ENCODE measurements at regions of chr7 and their contacts with region 1.

Region 1: DNA sequence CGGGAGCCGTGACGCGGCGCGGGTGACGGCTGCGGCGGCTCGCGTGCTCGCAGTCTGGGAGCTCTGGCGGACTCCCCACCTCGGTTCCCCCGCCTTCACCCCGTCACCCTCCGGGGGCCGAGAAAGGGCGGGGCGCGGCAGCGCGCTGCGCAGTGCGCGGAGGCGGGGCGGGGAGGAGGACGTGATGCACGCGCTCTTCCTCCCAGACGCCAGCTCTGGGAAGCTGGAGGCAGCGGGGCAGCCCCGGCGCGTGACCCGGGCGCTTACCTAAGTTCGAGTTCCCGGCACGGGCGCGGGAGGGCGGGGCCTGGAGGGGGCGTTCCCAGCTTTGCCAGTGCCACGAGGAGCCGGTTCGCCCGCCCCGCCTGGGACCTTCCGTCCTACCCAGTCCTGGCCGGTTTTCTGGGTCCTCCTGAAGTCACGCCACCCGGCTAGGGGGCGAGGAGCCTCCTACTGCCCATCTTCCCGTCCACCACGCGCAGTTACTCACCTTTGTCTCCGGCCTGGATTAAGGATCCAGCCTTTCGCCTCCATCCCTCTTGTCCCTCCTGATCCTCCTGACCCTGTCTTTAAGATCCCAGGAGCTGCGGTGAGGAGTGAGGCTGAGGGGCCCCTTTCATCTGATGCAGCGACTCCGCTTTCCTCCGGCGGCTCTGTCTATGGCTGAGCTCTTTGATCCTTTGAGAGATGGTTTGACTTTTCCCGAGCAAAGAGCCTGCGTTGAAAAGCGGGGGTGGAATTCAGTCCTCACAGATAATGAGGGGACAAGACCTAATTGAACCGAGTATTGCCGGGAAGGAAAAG is 470 bp upstream of the NAMPT start:
- DNase-seq: peak; percentile 100
- ATAC-seq: peak; percentile 80
- H3K4me3 Mint-ChIP-seq: peak overlapping the region; percentile 94
- H3K27ac Mint-ChIP-seq: peak overlapping the region; percentile 99
- H3K4me1 Mint-ChIP-seq: peaks cover 45% of the 10 kb centered on the region
- H3K27me3 Mint-ChIP-seq: no peaks in the 10 kb centered on the region

Region 2: GRCh38 chr7:106112117-106112971 is 172.9 kb before region 1 on chr7 and contains the start of gene SYPL1:
- CTCF ChIA-PET with region 1: no interaction called
- POLR2A ChIA-PET with region 1: interaction called, 4 read pairs
- intact Hi-C with region 1: loop called (anchors 1 to 10 kb)
- DNase-seq: peak; percentile 95
- ATAC-seq: peak; percentile 86
- H3K4me3 Mint-ChIP-seq: peak within 1 kb of the TSS; percentile 79
- H3K27ac Mint-ChIP-seq: peak within 1 kb of the TSS; percentile 89
- H3K4me1 Mint-ChIP-seq: peaks cover 64% of the 10 kb centered on the region
- H3K27me3 Mint-ChIP-seq: no peaks in the 10 kb centered on the region
- total RNA-seq, gene SYPL1: 23.7 to 28.8 TPM

Region 3: DNA sequence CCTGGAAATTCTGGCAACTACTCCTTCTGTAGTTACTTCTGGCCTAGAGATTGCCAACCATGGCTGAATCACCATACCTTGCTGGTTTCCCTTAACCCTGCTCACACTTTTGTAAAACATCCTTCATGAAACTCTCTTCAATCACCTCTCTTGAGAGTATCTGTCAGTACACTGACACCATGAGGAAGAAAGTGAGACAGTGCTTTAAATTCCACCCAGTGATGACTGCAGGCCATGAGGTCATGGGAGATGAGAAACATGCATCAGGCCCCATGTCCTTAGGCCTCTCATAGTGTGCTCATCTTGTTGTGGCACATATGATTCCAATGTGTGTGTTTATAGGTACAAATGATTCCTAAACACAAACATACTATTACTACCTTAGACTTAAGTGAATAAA is 24.1 kb after region 1 on chr7:
- CTCF ChIA-PET with region 1: no interaction called
- POLR2A ChIA-PET with region 1: interaction called, 8 read pairs
- intact Hi-C with region 1: loop called (anchors 1 to 2 kb)
- DNase-seq: peak; percentile 63
- ATAC-seq: peak; percentile 96
- H3K4me3 Mint-ChIP-seq: no peak overlapping the region
- H3K27ac Mint-ChIP-seq: peak overlapping the region; percentile 32
- H3K4me1 Mint-ChIP-seq: peaks cover 28% of the 10 kb centered on the region
- H3K27me3 Mint-ChIP-seq: peaks cover 17% of the 10 kb centered on the region

Region 4: DNA sequence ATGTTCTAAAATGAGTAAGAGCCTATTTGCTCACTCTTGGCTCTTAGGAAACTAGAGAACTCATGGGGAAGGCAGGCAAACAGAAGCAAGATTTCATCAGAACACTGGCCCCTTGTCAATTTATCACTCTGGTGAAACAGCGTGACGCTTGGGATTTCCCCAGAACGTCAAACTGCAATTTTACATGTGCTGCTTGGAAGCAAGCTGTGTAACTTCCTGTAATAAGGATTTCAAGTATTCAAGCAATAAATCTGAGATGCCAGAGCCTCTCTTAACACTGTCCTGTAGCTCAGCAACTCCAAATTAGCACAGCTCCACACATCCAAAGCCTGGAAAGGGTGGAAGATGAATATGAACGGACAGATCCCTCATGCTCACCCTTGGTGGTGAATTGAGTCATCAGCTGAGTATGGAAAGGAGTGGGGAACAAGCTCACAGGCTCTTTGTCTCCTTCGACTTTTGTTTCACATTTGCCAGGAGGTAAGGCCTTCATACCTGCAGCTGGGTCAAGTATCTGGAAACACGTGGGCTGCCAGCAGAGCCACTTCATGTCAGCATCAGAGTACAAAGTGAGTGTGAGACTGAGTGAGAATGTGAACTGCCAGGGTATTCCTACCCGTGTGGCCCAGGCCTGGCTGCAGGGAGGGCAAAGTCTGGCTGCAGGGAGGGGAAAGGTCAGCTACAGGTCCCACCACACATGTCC is 139.9 kb after region 1 on chr7:
- CTCF ChIA-PET with region 1: interaction called, 4 read pairs
- POLR2A ChIA-PET with region 1: interaction called, 40 read pairs
- intact Hi-C with region 1: loop called (anchors 1 kb)
- DNase-seq: peak; percentile 89
- ATAC-seq: peak; percentile 79
- H3K4me3 Mint-ChIP-seq: peak overlapping the region; percentile 70
- H3K27ac Mint-ChIP-seq: peak overlapping the region; percentile 99
- H3K4me1 Mint-ChIP-seq: peaks cover 88% of the 10 kb centered on the region
- H3K27me3 Mint-ChIP-seq: peaks cover 2% of the 10 kb centered on the region

Region 5: DNA sequence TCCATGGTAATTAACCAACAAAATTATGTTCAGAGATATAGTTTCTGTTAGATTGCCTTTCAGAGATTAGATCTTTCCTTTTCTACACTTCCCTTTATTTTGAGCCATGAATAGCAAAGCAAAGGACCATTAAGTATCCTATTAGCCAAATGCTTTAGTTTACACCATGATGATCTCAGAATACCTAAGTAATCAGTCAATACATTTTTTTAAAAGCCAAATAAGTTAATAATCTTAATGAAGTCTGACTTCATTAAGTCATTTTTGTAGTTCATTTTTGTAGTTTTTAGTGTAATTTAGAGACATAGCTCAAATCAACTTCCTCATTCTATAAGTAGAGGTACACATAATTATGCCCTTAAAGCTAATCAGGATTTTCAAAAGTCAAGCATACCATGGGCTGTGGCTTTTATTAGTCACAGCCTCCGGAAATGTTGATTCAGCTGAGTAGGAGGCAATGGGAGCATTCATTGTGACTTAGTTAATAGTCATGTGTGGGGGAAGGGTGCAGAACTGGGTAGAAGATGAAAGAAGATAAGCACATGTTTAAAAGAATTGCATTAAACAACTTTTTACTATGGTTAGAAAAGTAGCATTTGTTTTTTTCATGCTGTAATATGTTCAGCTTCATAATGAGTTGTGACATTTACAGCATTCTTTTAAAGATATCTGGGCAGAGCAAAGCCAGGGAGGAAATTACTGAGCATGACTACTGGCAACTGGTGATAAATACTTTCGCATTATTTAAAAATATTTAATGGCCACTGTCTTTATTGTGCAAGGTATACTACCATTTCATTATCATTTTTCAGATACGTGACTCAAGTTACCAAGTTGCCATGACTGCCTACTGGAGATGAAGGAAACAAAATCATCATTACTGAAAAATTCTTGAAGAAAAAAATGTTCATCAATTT is 433.0 kb after region 1 on chr7:
- CTCF ChIA-PET with region 1: no interaction called
- POLR2A ChIA-PET with region 1: no interaction called
- intact Hi-C with region 1: no loop called
- DNase-seq: peak; percentile 90
- ATAC-seq: peak; percentile 98
- H3K4me3 Mint-ChIP-seq: no peak overlapping the region
- H3K27ac Mint-ChIP-seq: no peak overlapping the region
- H3K4me1 Mint-ChIP-seq: peaks cover 13% of the 10 kb centered on the region
- H3K27me3 Mint-ChIP-seq: no peaks in the 10 kb centered on the region

Region 6: DNA sequence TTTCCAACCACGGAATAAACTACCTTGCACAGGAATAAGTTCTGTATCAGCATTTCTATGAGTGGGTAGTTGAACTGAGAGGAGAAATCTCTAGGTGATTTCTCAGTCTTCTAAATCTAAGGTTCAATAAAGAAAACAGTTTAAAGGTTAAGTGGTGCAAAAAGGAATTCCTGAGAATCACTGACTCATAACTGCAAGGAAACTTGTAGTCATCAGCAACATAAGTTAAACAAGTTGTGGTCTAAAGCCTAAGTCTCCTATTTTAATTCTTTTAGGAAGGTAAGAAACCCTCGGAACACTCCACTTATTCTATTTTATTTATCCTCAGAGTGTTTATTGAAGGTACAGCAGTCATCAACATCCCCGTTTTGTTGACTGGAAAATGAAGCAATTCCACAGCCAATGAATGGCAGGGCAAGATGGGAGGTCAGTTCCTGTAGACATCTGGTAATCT is 487.4 kb after region 1 on chr7:
- CTCF ChIA-PET with region 1: no interaction called
- POLR2A ChIA-PET with region 1: no interaction called
- intact Hi-C with region 1: loop called in 1 of 2 experiments (anchors 1 kb)
- DNase-seq: no peak
- ATAC-seq: peak; percentile 79
- H3K4me3 Mint-ChIP-seq: peak overlapping the region; percentile 27
- H3K27ac Mint-ChIP-seq: peak overlapping the region; percentile 91
- H3K4me1 Mint-ChIP-seq: peaks cover 66% of the 10 kb centered on the region
- H3K27me3 Mint-ChIP-seq: no peaks in the 10 kb centered on the region

Region 7: DNA sequence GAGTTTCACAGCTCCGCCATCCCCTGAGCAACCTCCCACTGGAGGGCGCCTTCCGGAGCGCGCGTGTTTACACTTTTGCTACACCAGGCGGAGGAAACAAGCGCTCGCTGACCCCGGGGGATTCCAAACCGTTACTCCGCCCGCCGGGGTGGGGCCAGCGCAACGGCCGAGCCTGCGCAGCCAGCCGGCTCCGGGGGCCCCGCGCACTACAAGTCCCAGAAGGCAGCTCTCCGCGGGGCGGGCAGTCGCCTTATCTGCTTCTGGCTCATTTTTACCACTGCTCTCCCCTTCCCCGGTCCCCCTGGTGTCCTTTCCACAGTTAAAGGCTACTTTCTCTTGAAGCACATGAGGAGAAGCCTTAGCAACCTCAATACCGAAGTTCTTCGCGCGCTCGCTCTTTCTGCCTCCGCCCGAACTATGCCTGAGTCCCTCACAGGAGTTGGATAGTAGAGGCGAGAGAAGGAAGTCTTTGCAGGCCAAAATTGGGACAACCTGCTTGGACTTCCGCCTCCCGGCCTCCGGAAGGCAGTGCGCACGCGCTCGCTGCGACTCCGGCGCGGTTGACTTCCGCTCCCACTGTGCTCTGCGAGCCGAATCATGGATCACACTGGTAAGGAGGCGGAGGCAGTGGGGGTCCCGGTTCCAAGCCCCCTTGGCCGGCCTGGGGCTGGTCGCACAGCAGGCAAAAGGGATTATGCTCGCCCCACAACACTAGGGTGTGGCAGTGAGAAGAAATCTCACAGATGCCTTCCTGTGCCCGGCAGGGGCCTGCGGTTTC is 1458.5 kb after region 1 on chr7 and contains the start of gene CBLL1:
- CTCF ChIA-PET with region 1: no interaction called
- POLR2A ChIA-PET with region 1: no interaction called
- intact Hi-C with region 1: loop called in 1 of 2 experiments (anchors 2 kb)
- DNase-seq: peak; percentile 99
- ATAC-seq: peak; percentile 94
- H3K4me3 Mint-ChIP-seq: peak within 1 kb of the TSS; percentile 88
- H3K27ac Mint-ChIP-seq: peak within 1 kb of the TSS; percentile 100
- H3K4me1 Mint-ChIP-seq: peaks cover 44% of the 10 kb centered on the region
- H3K27me3 Mint-ChIP-seq: no peaks in the 10 kb centered on the region
- total RNA-seq, gene CBLL1: 36.9 to 57.9 TPM